A673 (cell line): ENCODE measurements at regions of chr18 and their contacts with region 1.

Region 1: DNA sequence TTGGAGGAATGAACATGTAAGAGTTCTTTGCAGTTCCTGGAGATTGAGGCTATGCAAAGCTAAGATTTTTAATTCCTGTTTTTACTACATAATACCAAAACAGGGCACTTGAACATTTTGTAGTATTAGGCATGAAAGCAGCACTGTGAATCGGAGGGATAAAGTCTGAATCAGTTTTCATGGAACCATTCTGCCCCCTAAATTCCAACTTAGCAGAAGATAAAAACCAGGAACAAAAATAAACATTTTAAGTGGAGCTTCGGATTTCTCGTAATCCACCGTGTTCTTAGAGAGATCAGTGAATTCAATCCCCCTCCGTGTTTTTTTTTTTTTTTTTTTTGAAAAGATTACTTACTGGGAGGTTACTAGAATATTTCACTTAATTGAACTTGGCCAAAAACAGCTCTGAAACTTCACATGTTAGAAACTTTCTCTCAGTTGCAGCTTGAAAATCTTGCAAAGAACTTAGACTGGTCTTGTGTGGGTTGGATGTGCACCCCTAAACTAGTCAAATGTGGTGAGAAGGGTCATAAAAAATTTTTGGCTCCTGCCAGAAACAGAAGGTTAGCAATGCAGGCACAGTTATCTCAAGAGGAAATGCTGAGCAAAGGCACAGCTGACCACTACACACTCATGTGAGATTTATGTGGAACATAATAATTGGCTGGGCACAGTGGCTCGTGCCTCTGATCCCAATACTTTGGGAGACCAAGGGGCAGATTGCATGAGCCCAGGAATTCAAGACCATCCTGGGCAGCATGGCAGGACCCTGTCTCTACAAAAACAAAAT is 145.4 kb upstream of the RNF152 start:
- DNase-seq: no peak
- H3K4me3 ChIP-seq: no peak overlapping the region
- H3K27ac ChIP-seq: no peak overlapping the region
- H3K4me1 ChIP-seq: no peaks in the 10 kb centered on the region
- H3K27me3 ChIP-seq: no peaks in the 10 kb centered on the region
- CTCF ChIP-seq: no peak

Region 2: DNA sequence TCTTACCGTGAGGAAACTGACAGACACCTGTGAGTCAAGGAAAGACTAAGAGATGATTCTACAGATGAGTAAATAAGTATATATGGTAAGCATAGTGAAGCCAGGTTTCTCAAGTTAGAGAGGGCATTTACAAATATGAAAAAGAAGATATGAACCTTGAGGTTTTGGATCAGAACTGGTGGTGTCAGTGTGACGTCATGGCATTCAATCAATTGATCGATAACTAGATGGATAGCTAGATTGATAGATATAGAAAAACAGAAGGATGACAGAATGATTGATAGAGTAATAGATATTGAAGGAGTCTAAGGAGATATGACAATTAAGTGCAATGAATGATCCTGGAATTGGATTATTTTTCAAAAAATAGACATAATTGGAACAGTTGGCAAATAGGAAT is 1315.4 kb before region 1 on chr18:
- CTCF ChIA-PET with region 1: no interaction called
- POLR2A ChIA-PET with region 1: no interaction called
- intact Hi-C with region 1: no loop called
- DNase-seq: no peak
- H3K4me3 ChIP-seq: no peak overlapping the region
- H3K27ac ChIP-seq: no peak overlapping the region
- H3K4me1 ChIP-seq: no peaks in the 10 kb centered on the region
- H3K27me3 ChIP-seq: no peaks in the 10 kb centered on the region
- CTCF ChIP-seq: no peak

Region 3: DNA sequence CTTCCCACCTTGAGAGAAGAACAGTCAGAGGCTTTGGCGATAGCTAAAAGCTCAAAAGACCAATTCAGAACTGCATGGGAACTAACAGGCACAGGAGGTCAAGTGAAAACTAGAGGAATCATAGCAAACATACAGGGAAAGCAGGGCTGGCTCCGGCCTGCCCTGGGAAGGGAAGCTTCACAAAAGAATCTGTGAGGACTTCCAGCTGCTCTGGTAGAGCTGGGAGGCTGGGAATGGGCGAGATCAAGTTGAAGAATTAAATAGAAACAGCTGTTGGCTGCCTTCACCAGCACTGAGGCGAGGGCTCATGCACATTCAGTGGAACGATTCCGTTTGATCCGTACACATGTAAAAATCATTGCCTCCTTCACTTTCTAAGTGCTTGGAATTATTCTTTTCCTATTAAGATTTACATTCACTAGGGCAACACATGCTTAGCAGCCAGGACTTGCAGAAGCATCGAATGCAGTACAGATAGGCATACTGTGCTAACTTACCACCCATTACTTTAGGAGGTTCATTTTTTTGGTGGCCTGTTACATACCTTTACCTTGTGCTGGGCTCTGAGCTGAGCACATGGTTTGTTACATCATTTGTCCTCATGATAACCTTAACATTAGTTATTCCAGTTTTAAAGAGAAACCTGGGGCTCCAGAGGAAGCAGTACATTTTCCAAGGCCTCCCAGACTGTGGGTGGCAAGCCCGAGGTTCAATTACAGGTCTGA is 20.0 kb before region 1 on chr18:
- CTCF ChIA-PET with region 1: no interaction called
- POLR2A ChIA-PET with region 1: no interaction called
- intact Hi-C with region 1: loop called (anchors 1 kb)
- DNase-seq: peak; percentile 88
- H3K4me3 ChIP-seq: no peak overlapping the region
- H3K27ac ChIP-seq: peak overlapping the region; percentile 53
- H3K4me1 ChIP-seq: peaks cover 10% of the 10 kb centered on the region
- H3K27me3 ChIP-seq: no peaks in the 10 kb centered on the region
- CTCF ChIP-seq: no peak

Region 4: DNA sequence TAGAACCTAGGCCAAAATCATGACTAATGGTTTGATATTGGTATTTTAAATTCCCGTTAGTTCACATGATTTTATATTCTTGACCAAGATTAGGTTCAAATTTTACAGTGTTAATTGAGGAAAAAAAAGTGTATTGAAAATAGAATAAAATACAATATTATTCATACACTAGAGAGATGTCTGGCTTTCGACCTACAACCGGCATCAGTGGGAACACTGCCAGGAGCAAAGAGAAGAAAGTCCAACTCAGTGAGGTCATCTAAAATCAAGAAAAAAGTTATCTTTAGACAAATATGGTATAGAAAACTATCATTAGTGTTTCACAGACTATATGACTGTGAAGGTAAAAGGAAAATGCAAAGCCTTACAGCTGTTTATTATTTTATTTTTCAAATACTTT is 67.2 kb after region 1 on chr18:
- CTCF ChIA-PET with region 1: no interaction called
- POLR2A ChIA-PET with region 1: no interaction called
- intact Hi-C with region 1: no loop called
- DNase-seq: no peak
- H3K4me3 ChIP-seq: no peak overlapping the region
- H3K27ac ChIP-seq: no peak overlapping the region
- H3K4me1 ChIP-seq: no peaks in the 10 kb centered on the region
- H3K27me3 ChIP-seq: no peaks in the 10 kb centered on the region
- CTCF ChIP-seq: no peak

Region 5: DNA sequence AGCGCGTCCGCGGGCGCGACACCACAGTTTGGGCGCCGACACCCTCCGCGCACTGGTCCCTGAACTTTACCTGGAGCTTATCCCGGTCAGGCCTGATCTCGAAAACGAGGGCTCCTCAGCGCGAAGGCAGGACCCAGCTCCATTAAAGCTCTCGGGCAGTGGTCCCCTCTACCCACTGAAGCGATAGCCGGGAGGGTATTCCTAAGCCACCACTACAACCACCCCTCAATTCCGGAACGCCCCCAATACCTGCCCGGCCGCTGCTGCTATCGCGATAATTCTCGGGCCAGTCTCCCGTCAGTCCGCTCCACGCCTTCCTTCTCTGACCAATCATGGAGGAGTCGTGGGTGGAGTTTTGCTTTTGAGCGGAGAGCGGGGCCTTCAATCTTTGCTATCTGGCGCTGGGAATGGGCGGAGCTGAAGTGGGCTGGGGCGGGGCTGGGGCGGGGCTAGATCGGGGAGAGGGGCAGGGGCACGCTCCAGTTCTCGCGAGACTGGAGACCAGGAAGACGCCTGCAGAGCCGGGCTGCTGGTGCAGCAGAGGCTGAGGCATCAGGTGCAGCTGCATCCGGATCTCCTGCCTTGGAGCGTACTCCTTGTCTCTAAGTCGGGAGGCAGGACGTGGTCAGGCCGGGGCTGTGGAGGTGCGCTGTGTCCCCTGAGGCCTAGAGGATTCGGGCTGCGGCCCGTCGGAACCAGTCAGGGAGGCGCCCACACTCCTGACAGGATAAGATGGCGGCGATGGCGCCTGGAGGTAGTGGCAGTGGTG is 148.8 kb after region 1 on chr18 and contains the starts of genes PIGN and RELCH:
- CTCF ChIA-PET with region 1: no interaction called
- POLR2A ChIA-PET with region 1: no interaction called
- intact Hi-C with region 1: no loop called
- DNase-seq: peak; percentile 99
- H3K4me3 ChIP-seq: peak within 1 kb of the TSS; percentile 98
- H3K27ac ChIP-seq: peak within 1 kb of the TSS; percentile 74
- H3K4me1 ChIP-seq: peaks cover 18% of the 10 kb centered on the region
- H3K27me3 ChIP-seq: no peaks in the 10 kb centered on the region
- CTCF ChIP-seq: no peak
- total RNA-seq, gene PIGN: 21.3 and 23.8 TPM in 2 replicates
- total RNA-seq, gene RELCH: 29.2 and 31.6 TPM in 2 replicates